Ovary (tissue), 10 donors: ENCODE measurements at regions of chr7 and their contacts with region 1.

Region 1: DNA sequence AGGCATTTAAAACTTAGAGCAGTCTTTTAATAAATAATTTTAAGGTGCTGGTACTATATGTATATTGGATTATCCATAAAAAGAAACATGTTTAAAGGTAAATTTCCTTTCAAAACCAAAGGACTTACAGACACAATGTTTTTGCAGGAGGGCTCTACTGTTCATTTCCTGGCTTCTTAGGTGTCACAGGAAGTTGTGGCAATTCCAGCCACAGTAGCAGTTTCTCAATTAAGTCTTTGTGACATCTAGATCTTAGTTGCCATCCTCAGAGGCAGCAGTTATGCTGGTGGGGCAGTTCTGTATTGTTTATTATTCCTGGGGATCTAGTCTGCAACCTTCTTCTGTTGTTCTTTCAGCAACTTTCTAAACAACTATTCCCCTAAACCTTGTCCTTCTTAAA is 460.1 kb downstream of the MAGI2 start:
- DNase-seq: no peak
- H3K4me3 ChIP-seq: no peak overlapping the region
- H3K27ac ChIP-seq: no peak overlapping the region
- H3K4me1 ChIP-seq: no peaks in the 10 kb centered on the region
- H3K27me3 ChIP-seq: no peaks in the 10 kb centered on the region
- CTCF ChIP-seq: no peak
- EP300 ChIP-seq: no peak
- POLR2A ChIP-seq: no peak

Region 2: DNA sequence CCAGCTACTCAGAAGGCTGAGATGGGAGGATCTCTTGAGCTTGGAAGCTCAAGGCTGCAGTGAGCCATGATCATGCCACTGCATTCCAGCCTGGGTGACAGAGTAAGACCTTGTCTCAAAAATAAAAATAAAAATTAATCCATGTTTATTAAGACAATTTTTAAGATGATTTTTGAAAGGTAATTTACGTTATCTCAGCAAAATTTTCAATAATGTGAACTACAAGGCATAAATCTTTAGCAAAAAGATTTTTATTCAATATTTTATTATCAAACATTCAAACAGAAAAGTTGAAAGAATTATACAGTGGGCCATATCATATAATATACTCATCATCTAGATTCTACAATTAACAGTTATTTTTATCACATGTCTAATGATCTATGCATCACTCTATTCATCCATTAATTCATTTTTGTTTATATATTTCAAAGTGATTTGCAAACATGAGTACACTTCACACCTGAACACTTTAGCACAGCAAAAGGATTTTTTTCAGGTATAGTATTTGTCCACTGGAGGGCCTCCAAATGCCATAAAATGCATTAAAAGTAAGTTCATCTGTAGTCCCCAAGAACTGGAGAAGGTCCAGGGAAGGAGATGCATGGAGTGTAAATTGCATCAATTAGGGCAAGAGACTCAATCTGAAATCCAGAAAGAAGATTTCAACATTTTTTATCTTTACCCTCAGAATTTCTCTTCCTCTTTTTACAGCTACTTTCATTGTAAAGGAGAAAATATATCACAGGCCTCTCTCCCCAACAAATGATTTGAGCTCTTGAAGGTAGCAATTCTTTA is 1335.7 kb before region 1 on chr7:
- intact Hi-C with region 1: loop called in 1 of 4 experiments (anchors 5 kb)
- DNase-seq: no peak
- H3K4me3 ChIP-seq: no peak overlapping the region
- H3K27ac ChIP-seq: no peak overlapping the region
- H3K4me1 ChIP-seq: no peaks in the 10 kb centered on the region
- H3K27me3 ChIP-seq: no peaks in the 10 kb centered on the region
- CTCF ChIP-seq: peak in 1 of 3 donors; percentile 41
- EP300 ChIP-seq: no peak
- POLR2A ChIP-seq: no peak

Region 3: GRCh38 chr7:78905436-78905835 is 87.9 kb before region 1 on chr7:
- intact Hi-C with region 1: no loop called
- DNase-seq: no peak
- H3K4me3 ChIP-seq: no peak overlapping the region
- H3K27ac ChIP-seq: no peak overlapping the region
- H3K4me1 ChIP-seq: no peaks in the 10 kb centered on the region
- H3K27me3 ChIP-seq: no peaks in the 10 kb centered on the region
- CTCF ChIP-seq: no peak
- EP300 ChIP-seq: no peak
- POLR2A ChIP-seq: no peak

Region 4: DNA sequence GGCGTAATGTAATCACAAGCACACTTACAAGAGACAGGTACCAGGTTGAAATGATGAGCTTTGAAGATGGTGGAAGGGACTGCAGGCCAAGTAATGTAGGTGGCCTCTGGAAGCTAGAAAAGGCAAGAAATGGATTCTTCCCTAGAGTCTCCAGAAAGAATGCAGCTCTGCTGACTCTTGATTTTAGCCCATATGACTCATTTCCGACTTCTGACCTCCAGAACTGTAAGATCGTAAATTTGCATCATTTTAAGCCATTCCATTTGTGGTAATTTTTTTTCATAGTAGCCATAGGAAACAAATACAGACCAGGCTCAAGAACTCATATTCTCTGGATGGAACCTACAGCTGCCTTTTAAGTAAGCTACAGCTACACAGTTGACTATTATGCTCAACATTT is 144.6 kb after region 1 on chr7:
- intact Hi-C with region 1: no loop called
- DNase-seq: no peak
- H3K4me3 ChIP-seq: no peak overlapping the region
- H3K27ac ChIP-seq: no peak overlapping the region
- H3K4me1 ChIP-seq: no peaks in the 10 kb centered on the region
- H3K27me3 ChIP-seq: no peaks in the 10 kb centered on the region
- CTCF ChIP-seq: no peak
- EP300 ChIP-seq: no peak
- POLR2A ChIP-seq: no peak

Region 5: DNA sequence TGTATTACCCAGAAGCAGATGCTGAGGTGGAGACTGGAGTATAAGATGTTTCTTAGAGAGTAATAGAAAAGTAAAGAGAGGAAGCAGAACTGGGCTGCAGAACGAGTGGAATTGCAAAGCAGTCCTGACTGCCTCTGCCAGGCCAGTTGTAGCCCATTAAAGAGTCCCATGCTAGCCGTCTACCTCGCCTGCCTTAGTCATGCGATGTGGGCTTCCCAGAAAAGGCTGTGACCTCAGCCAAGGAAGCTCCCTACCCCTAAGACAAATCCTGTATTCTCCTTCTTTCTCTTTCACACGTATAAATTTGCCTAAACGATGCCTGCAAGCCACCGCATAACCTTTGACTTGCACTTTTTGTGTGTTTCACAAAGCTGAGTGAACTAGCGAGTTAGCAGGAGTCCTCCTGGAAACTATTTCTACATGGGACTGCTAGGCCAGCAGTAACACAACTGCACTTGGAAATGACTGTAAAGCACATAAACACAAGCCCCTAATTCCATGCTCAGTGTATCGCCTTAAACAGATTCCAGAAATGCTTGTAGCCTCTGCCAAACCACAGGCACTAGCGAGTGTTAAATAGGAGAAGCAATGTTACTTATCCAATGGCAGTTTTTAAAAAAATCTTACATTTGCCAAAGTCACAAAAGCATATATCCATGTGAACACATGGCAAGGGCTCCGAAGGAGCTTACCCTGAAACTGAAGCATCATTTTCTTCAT is 1093.9 kb after region 1 on chr7:
- intact Hi-C with region 1: no loop called
- DNase-seq: no peak
- H3K4me3 ChIP-seq: no peak overlapping the region
- H3K27ac ChIP-seq: peak overlapping the region in 1 of 2 donors; percentile 47
- H3K4me1 ChIP-seq: peaks cover 6% of the 10 kb centered on the region
- H3K27me3 ChIP-seq: no peaks in the 10 kb centered on the region
- CTCF ChIP-seq: no peak
- EP300 ChIP-seq: no peak
- POLR2A ChIP-seq: no peak